ENCODE measurements at regions of chr1 and their contacts with region 1.

Region 1: GRCh38 chr1:247322849-247323586 is 8.6 kb downstream of the ZNF496 start:
- DNase-seq: no peak
- ATAC-seq: no peak
- H3K4me3 ChIP-seq: no peak overlapping the region
- H3K27ac ChIP-seq: no peak overlapping the region
- H3K4me1 ChIP-seq: no peaks in the 10 kb centered on the region
- H3K27me3 ChIP-seq: no peaks in the 10 kb centered on the region
- CTCF ChIP-seq: no peak
- POLR2A ChIP-seq: no peak
- RAD21 ChIP-seq: no peak

Region 2: DNA sequence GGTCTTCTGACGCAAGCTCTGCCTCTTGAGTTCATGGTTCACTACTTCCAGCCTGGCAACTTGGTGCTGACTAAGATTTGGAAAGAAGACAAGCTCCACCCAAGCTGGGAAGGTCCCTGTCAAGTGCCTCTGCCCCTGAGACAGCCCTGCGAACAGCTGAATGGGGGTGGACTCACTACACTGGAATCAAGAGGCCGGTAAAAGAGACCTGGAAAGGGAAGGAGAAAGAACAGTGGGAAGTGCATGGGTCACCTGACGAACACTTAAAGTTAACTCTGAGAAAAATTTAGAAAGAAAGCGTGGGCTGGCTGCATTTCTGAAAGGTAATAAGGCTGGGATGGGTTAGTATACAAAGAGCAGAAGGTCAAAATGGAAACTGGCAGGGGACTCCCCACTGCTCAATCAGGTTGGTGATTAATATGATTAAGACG is 34.8 kb after region 1 on chr1:
- CTCF ChIA-PET with region 1: interaction called, 15 read pairs
- POLR2A ChIA-PET with region 1: no interaction called
- dilution Hi-C with region 1: no loop called
- in situ Hi-C with region 1: no loop called
- intact Hi-C with region 1: no loop called
- DNase-seq: peak; percentile 94
- ATAC-seq: peak; percentile 67
- H3K4me3 ChIP-seq: no peak overlapping the region
- H3K27ac ChIP-seq: peak overlapping the region; percentile 39; the same call in 1 of the 2 replicates
- H3K4me1 ChIP-seq: peaks cover 11% of the 10 kb centered on the region; the same call in 1 of the 2 replicates
- H3K27me3 ChIP-seq: no peaks in the 10 kb centered on the region
- CTCF ChIP-seq: no peak
- POLR2A ChIP-seq: no peak
- RAD21 ChIP-seq: no peak

Measured in IMR-90 (cell line).